ENCODE measurements at regions of chr6 and their contacts with region 1.

Region 1: GRCh38 chr6:7389451-7390225 is at the starts of genes CAGE1 and RIOK1:
- DNase-seq: peak; percentile 99
- H3K4me3 Mint-ChIP-seq: peak within 1 kb of the TSS; percentile 93
- H3K27ac Mint-ChIP-seq: peak within 1 kb of the TSS; percentile 100
- H3K4me1 Mint-ChIP-seq: peaks cover 43% of the 10 kb centered on the region
- H3K27me3 Mint-ChIP-seq: no peaks in the 10 kb centered on the region
- total RNA-seq, gene CAGE1: 0.16 and 0.31 TPM in 2 replicates
- total RNA-seq, gene RIOK1: 56.7 and 62.1 TPM in 2 replicates

Region 2: GRCh38 chr6:7276199-7276524 is 113.5 kb before region 1 on chr6:
- intact Hi-C with region 1: loop called (anchors 1 kb)
- DNase-seq: no peak
- H3K4me3 Mint-ChIP-seq: no peak overlapping the region
- H3K27ac Mint-ChIP-seq: no peak overlapping the region
- H3K4me1 Mint-ChIP-seq: peaks cover 6% of the 10 kb centered on the region
- H3K27me3 Mint-ChIP-seq: no peaks in the 10 kb centered on the region

Region 3: DNA sequence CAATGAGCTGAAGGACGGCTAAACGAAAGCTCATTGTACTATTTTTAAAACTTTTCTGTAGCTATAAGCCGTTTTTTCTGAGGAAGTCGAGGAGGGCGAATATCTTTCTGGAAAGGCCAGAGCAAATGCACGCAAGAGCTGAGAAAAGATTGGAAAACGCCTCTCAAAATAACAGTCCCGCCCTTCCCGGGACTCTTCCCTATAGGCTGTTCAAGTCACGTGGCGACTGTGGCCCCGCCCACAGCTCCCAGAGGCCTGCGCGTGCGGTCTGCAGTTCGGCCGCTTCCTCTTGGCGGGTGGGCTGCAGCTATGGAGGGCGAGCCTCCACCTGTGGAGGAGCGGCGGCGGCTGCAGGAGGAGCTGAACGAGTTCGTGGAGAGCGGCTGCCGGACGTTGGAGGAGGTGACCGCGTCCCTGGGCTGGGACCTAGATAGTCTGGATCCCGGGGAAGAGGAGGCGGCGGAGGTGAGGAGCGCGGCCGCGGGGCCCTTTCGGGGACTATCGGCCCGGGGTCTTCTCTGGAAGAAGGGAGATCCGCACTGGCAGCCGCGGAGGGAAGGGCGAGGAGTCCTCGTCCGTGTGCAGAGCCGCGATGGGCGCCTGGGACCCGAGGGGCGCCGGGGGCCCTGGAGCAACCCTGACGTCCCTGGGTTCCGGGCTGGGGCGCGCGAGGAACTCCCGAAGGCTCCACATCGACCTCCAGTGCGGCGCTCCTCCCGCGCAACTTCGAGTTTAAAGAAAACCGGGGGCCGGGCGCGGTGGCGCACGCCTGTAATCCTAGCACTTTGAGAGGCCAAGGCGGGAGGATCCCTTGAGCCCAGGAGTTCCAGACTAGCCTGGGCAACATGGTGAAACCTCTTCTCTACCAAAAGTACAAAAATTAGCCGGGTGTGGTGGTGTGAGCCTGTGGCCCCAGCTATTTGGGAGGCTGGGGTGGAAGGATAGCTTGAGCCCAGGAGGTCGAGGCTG is 200.6 kb after region 1 on chr6 and contains the start of gene SNRNP48:
- intact Hi-C with region 1: loop called (anchors 1 kb)
- DNase-seq: peak; percentile 98
- H3K4me3 Mint-ChIP-seq: peak within 1 kb of the TSS; percentile 100
- H3K27ac Mint-ChIP-seq: peak within 1 kb of the TSS; percentile 96
- H3K4me1 Mint-ChIP-seq: peaks cover 30% of the 10 kb centered on the region
- H3K27me3 Mint-ChIP-seq: peaks cover 7% of the 10 kb centered on the region
- total RNA-seq, gene SNRNP48: 18.4 and 19.6 TPM in 2 replicates

Region 4: DNA sequence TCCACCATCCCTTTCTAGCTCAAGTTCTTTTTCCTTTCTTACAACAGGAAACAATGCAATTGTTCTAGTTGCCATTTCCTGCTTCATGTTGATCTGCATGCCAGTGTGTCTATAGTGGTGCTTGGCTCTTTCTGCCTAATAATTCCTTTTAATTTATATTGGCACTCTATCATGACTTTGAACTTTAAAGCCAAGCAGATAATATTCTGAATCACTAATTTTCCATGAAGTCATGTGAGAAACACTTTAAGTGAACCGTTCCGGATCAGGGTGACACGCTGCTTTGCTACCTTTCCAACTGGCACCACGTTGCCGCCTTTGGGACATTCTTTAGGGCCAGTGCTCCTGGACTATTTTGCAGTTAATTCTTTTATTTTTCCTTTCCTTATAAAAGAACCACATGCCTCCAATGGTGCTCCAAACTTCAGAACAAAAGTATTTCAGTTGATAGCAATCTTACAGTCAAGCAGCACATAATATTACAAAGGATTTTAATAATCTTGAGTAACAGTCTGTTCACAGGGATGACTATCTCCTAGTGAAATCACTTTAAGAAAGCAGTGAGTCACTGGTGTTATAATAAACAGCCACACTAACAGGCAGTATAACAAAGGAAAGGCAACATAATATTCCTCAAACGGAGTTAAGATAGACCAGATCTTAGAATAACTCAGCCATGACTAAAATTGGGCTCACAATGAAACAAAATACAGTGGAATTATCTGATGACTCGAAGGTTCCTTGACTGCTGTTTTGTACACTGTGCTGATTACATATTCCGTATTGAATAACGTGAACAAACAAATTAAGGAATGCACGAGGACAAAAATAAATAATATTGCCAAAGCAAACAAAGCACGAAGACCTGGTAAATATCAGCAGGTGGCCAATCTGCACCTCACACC is 693.6 kb after region 1 on chr6:
- intact Hi-C with region 1: loop called (anchors 5 kb)
- DNase-seq: no peak
- H3K4me3 Mint-ChIP-seq: no peak overlapping the region
- H3K27ac Mint-ChIP-seq: peak overlapping the region; percentile 83
- H3K4me1 Mint-ChIP-seq: peaks cover 28% of the 10 kb centered on the region
- H3K27me3 Mint-ChIP-seq: no peaks in the 10 kb centered on the region

Region 5: DNA sequence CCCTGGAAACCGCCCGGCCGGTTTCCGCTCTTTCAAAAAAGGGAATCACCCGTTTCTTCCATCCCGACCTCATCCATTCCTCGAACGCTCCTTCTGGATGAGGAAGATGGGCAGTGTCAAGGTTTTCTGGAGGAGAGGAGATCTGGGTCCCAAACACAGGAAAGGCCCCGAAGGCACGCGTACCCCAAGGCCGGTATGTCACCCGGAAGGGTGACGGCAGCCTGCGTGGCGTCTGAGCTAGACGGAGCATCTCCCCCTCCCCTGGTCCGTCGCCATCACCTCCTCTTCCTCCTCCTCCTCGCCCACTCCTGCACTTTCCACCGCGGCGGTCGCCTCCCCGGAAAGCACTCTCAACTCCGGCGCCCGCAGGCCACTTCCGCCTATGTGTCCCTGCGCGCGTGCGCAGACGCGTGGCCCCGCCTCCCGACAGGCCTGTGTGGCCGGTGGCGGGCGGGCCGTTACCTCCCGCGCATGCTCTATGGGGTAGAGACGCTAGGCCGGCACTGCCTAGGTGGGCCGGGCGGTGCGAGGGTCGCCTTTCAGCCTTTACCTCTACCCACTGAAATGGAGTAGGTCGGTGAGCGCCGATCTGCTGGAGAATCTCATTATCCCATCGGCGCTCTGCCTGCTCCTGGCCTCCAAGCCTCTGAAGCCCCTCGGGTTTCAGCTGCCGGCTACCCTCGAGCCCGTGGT is 1045.7 kb after region 1 on chr6 and contains the start of gene SLC35B3:
- intact Hi-C with region 1: loop called (anchors 10 kb)
- DNase-seq: peak; percentile 100
- H3K4me3 Mint-ChIP-seq: peak within 1 kb of the TSS; percentile 97
- H3K27ac Mint-ChIP-seq: peak within 1 kb of the TSS; percentile 99
- H3K4me1 Mint-ChIP-seq: peaks cover 32% of the 10 kb centered on the region
- H3K27me3 Mint-ChIP-seq: peaks cover 2% of the 10 kb centered on the region
- total RNA-seq, gene SLC35B3: 7.1 and 7.3 TPM in 2 replicates

Measured in activated CD4-positive, alpha-beta T cell treated with anti-CD3 and anti-CD28 coated beads, Interleukin-2, amount 10 ng/mL, durations not matched to agents 24 days and 14 days (primary cell).